Esophagus squamous epithelium (tissue), 5 donors: ENCODE measurements at regions of chr1 and their contacts with region 1.

Region 1: GRCh38 chr1:151254217-151255213 is at the start of gene PSMD4:
- DNase-seq: peak; percentile 46
- H3K4me3 ChIP-seq: peak within 1 kb of the TSS; percentile 72 to 99 (median 86)
- H3K27ac ChIP-seq: peak within 1 kb of the TSS; percentile 89 to 96 (median 92)
- H3K4me1 ChIP-seq: peaks cover 9 to 41% (median 11%) of the 10 kb centered on the region in 3 donors
- H3K27me3 ChIP-seq: no peaks in the 10 kb centered on the region
- CTCF ChIP-seq: peak in 2 of 6 experiments; percentile 9 to 14
- POLR2A ChIP-seq: peak in 3 of 4 donors; percentile 65 to 91 (median 69)
- total RNA-seq, gene PSMD4: 78.2 to 117 (median 109) TPM

Region 2: DNA sequence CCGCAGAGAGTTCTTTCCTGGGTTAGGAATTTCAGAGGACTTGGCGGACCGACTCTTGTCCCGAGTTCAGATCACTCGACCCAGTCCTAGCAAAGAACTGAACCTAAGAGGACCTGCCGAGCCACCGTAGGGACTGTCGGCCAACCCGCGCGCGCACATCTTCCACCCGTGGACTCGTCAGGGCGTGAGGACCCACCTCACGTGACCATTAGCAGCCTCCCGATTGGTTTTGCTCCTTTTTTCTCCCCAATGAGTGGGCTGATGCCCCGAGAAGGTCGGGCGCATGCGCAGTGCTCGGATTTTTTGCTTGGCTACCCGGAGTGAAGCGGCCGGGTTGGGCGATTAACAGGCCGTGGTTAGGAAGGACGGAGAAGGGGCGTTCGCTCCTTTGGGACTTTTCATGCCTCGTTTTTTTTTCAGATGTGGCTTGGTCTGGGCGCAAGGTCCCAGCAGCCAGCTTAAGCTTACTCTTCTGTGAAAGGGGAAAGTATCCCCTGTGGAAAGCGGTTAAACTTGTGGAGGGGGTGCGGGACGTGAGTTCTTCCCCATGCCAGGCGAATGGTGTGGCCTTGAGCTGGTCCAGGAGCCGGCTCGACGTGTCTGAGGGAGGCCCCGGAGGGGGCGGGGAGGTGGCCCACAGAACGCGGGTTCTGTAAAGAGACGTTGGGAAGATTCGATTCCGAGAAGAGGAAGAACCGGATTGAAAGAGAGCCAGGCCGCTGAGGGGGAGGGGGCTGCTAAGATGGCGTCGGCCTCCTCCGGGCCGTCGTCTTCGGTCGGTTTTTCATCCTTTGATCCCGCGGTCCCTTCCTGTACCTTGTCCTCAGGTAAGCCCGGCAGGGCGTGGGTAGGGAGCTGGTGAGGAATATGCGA is 56.0 kb before region 1 on chr1 and contains the start of gene PIP5K1A:
- intact Hi-C with region 1: loop called (anchors 5 kb)
- DNase-seq: peak; percentile 96
- H3K4me3 ChIP-seq: peak within 1 kb of the TSS; percentile 67 to 89 (median 83)
- H3K27ac ChIP-seq: peak within 1 kb of the TSS; percentile 88 to 97 (median 96)
- H3K4me1 ChIP-seq: peaks cover 7 to 80% (median 35%) of the 10 kb centered on the region in 3 donors
- H3K27me3 ChIP-seq: no peaks in the 10 kb centered on the region
- CTCF ChIP-seq: peak in 2 of 6 experiments; percentile 7 to 43
- POLR2A ChIP-seq: peak in 3 of 4 donors; percentile 87 to 93 (median 92)
- total RNA-seq, gene PIP5K1A: 21.5 to 49.2 (median 36.6) TPM

Region 3: DNA sequence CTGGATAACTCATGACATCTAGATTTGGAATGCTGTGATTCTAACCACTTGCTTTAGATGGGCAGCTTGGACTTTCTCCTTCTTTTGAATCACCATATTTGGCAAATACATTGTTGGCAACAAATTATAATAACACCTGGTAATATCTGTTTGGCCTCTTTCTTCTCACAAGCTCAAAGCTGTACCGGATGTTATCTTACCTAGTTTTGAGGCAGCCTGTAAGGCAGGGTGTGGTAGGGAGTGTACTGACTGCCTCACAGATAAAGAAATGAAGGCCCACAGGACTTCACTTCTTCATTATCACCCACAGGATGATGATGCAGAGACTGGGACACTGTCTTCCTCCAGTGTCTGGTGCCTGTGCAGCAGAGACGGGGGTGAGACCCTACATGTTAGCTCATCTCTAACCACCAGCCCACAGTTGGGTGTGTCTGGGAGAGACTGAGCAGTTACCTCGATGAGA is 314.1 kb after region 1 on chr1:
- intact Hi-C with region 1: no loop called
- DNase-seq: no peak
- H3K4me3 ChIP-seq: no peak overlapping the region
- H3K27ac ChIP-seq: peak overlapping the region in 3 of 4 donors; percentile 10 to 85 (median 48)
- H3K4me1 ChIP-seq: peaks cover 0 to 67% (median 3%) of the 10 kb centered on the region in 3 donors
- H3K27me3 ChIP-seq: no peaks in the 10 kb centered on the region
- CTCF ChIP-seq: no peak
- POLR2A ChIP-seq: no peak